Calu3 (cell line): ENCODE measurements at regions of chr3 and their contacts with region 1.

Region 1: GRCh38 chr3:123880998-123881561 is 3.1 kb downstream of the MYLK start:
- DNase-seq: peak; percentile 42
- H3K4me3 Mint-ChIP-seq: no peak overlapping the region
- H3K27ac Mint-ChIP-seq: no peak overlapping the region
- H3K4me1 Mint-ChIP-seq: peaks cover 20% of the 10 kb centered on the region
- H3K27me3 Mint-ChIP-seq: no peaks in the 10 kb centered on the region
- CTCF ChIP-seq: no peak

Region 2: DNA sequence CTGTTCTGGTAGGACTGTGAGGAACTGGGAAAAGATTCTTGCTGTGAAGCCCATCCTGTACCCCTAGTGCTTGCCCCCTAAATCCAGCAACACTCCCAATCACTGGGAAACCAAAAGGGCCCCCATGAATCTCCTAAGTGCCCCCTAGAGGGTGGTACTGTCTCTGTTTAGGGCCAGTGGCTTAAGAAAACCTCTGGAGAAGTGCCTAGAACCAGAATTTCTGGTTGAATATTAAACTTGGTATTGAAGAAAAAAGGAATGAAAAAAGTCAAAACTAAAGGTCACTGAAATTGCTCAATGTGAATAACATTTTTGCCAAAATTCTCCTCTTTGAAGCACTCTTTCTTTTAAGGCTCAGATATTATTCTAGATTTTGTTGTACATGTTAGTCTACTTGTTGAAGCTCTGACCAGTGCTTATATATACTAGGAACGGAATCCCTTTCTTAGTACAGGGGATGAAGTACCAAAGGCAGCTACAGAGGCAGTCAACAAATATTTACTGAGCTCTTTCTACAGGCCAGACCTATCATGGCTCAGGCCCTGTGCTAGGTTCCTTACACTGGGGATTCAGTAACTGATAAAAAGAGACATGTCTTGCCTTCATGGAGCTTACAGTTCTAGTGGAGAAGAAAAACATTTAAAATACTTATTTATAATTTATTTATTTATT is 135.8 kb before region 1 on chr3:
- CTCF ChIA-PET with region 1: no interaction called
- intact Hi-C with region 1: loop called (anchors 2 kb)
- DNase-seq: peak; percentile 35
- H3K4me3 Mint-ChIP-seq: no peak overlapping the region
- H3K27ac Mint-ChIP-seq: no peak overlapping the region
- H3K4me1 Mint-ChIP-seq: peaks cover 3% of the 10 kb centered on the region
- H3K27me3 Mint-ChIP-seq: no peaks in the 10 kb centered on the region
- CTCF ChIP-seq: no peak

Region 3: GRCh38 chr3:123859177-123859576 is 21.9 kb before region 1 on chr3:
- CTCF ChIA-PET with region 1: no interaction called
- intact Hi-C with region 1: no loop called
- DNase-seq: no peak
- H3K4me3 Mint-ChIP-seq: no peak overlapping the region
- H3K27ac Mint-ChIP-seq: no peak overlapping the region
- H3K4me1 Mint-ChIP-seq: no peaks in the 10 kb centered on the region
- H3K27me3 Mint-ChIP-seq: no peaks in the 10 kb centered on the region
- CTCF ChIP-seq: no peak